Activated CD8-positive, alpha-beta T cell treated with anti-CD3 and anti-CD28 coated beads for 36 hours (primary cell): ENCODE measurements at regions of chr3 and their contacts with region 1.

Region 1: DNA sequence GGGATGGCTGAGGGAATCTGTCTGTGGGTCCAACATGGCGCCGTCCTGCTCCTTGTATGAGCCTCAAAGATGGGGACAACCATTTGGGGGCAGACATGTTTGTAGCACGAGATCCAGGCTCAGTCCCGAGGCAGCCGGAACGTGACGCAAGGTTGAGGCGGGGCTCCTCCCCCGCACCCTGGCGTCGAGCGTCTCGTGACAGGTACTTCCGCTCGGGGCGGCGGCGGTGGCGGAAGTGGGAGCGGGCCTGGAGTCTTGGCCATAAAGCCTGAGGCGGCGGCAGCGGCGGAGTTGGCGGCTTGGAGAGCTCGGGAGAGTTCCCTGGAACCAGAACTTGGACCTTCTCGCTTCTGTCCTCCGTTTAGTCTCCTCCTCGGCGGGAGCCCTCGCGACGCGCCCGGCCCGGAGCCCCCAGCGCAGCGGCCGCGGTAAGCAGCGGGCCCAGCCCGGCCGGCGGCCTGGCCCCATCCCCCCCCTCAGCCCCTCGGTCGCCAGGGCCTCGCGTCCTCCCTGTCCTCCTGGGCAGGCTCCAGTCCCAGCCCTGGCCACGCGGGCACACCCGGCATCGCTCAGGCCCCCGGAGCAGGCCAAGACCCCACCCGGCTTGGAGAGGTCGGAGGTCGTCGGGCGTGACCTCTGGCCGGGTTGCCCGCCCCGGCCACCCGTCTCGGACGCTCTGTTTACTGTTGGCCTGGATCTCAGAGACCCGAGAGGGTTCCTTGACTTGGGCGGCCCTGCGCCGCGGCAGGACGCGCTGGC is at the start of gene RAB7A:
- DNase-seq: peak; percentile 98
- ATAC-seq: peak; percentile 90
- H3K4me3 Mint-ChIP-seq: peak within 1 kb of the TSS; percentile 100
- H3K27ac Mint-ChIP-seq: peak within 1 kb of the TSS; percentile 97
- H3K4me1 Mint-ChIP-seq: peaks cover 50% of the 10 kb centered on the region
- H3K27me3 Mint-ChIP-seq: no peaks in the 10 kb centered on the region
- CTCF ChIP-seq: no peak
- total RNA-seq, gene RAB7A: 304 to 322 TPM

Region 2: GRCh38 chr3:128804017-128804810 is 78.1 kb after region 1 on chr3:
- CTCF ChIA-PET with region 1: interaction called, 3 read pairs
- POLR2A ChIA-PET with region 1: interaction called, 4 read pairs
- intact Hi-C with region 1: loop called (anchors 5 kb)
- DNase-seq: peak; percentile 84
- ATAC-seq: peak; percentile 81
- H3K4me3 Mint-ChIP-seq: peak overlapping the region; percentile 79
- H3K27ac Mint-ChIP-seq: peak overlapping the region; percentile 88
- H3K4me1 Mint-ChIP-seq: peaks cover 82% of the 10 kb centered on the region
- H3K27me3 Mint-ChIP-seq: no peaks in the 10 kb centered on the region
- CTCF ChIP-seq: no peak

Region 3: GRCh38 chr3:128984596-128984995 is 258.5 kb after region 1 on chr3:
- CTCF ChIA-PET with region 1: no interaction called
- POLR2A ChIA-PET with region 1: no interaction called
- intact Hi-C with region 1: no loop called
- DNase-seq: no peak
- ATAC-seq: no peak
- H3K4me3 Mint-ChIP-seq: no peak overlapping the region
- H3K27ac Mint-ChIP-seq: no peak overlapping the region
- H3K4me1 Mint-ChIP-seq: no peaks in the 10 kb centered on the region
- H3K27me3 Mint-ChIP-seq: no peaks in the 10 kb centered on the region
- CTCF ChIP-seq: no peak